Activated B cell treated with CpG ODN at 0.5 μM for 24 hours (primary cell): ENCODE measurements at regions of chr15 and their contacts with region 1.

Region 1: DNA sequence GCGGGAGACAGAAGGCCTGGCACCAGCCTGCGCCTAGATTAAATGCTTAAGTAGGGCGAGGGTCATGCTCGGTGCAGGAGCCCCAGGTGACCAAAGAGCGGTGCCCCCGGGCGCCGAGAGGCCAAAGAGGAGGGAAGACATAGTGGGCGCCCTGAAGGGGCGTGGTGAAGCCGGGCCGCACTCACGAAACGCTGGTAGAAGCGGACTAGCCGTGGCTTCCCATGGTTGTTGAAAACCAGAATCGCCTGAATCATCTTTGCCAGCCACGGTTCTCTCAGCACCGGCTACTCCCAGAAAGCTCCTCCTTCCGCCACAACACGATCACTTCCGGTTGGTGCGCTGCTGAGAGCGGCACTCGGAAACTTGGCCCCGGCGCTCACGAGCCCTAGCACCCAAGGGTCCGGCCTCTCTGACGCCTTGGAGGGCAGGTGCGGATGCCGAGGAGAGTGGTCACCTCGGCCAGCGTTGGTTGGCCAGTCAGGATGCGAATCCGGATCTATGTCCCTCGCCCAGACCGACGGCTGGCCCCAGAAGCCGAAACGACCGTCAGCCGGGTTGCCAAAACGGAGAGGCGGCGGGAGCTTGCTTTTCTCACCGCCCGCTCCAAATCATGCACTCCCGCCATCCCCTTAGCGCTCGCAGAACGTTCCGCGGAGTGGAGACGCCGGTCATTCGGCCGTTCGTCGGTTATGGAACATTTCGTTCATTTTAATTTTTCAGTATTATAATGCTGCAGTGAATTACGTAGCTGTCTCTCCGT is at the start of gene AP3S2:
- DNase-seq: peak; percentile 82
- ATAC-seq: peak; percentile 89
- H3K4me3 Mint-ChIP-seq: peak within 1 kb of the TSS; percentile 95
- H3K27ac Mint-ChIP-seq: peak within 1 kb of the TSS; percentile 94
- H3K4me1 Mint-ChIP-seq: peaks cover 40% of the 10 kb centered on the region
- H3K27me3 Mint-ChIP-seq: no peaks in the 10 kb centered on the region
- CTCF ChIP-seq: no peak
- total RNA-seq, gene AP3S2: 31.8 and 36.4 TPM in 2 replicates

Region 2: GRCh38 chr15:89781891-89782618 is 111.8 kb before region 1 on chr15:
- CTCF ChIA-PET with region 1: no interaction called
- POLR2A ChIA-PET with region 1: interaction called, 12 read pairs
- intact Hi-C with region 1: no loop called
- DNase-seq: no peak
- ATAC-seq: peak; percentile 74
- H3K4me3 Mint-ChIP-seq: peak overlapping the region; percentile 33
- H3K27ac Mint-ChIP-seq: peak overlapping the region; percentile 76
- H3K4me1 Mint-ChIP-seq: peaks cover 39% of the 10 kb centered on the region
- H3K27me3 Mint-ChIP-seq: no peaks in the 10 kb centered on the region
- CTCF ChIP-seq: no peak

Region 3: GRCh38 chr15:89806559-89807550 is 87.0 kb before region 1 on chr15:
- CTCF ChIA-PET with region 1: no interaction called
- POLR2A ChIA-PET with region 1: no interaction called
- intact Hi-C with region 1: no loop called
- DNase-seq: no peak
- ATAC-seq: no peak
- H3K4me3 Mint-ChIP-seq: no peak overlapping the region
- H3K27ac Mint-ChIP-seq: no peak overlapping the region
- H3K4me1 Mint-ChIP-seq: no peaks in the 10 kb centered on the region
- H3K27me3 Mint-ChIP-seq: peaks cover 7% of the 10 kb centered on the region
- CTCF ChIP-seq: no peak

Region 4: DNA sequence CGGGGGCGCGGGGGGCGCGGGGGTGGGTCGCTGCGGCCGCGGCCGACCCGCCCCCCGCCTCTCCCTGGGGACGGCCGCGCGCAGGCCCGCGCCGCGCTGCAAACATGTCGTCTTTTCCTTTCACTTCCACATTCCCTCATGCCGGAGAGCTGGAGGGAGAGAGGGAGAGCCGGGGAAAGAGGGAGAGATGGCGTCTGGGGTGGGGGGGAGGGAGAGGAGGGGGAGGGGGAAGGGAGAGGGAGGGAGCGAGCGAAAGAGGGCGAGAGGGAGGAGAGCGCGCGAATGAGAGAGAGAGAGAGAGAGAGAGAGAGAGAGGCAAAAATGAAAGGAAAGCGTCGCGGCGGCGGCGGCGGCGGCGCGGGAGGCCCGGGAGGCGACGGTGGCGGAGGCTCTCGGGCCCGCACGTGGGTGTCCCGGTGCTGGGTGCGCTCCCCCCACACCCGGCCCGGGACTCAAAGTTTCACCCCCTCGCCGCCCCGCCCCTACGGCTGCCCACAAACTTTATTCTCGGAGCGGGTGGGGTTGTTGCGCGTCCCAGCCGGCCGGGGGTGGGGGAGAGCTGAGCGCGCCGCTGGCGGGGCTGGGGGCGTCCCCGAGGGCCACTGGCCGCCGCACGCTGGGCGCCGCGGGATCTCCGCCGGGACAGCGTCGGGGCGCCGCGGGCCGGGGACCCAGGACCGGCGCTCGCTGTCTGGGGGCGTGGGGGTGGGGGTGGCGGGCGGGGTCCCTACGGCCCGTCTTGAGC is 108.0 kb after region 1 on chr15:
- CTCF ChIA-PET with region 1: no interaction called
- POLR2A ChIA-PET with region 1: interaction called, 15 read pairs
- intact Hi-C with region 1: loop called (anchors 2 kb)
- DNase-seq: peak; percentile 59
- ATAC-seq: peak; percentile 60
- H3K4me3 Mint-ChIP-seq: peak overlapping the region; percentile 91
- H3K27ac Mint-ChIP-seq: peak overlapping the region; percentile 91
- H3K4me1 Mint-ChIP-seq: peaks cover 41% of the 10 kb centered on the region
- H3K27me3 Mint-ChIP-seq: no peaks in the 10 kb centered on the region
- CTCF ChIP-seq: no peak

Region 5: DNA sequence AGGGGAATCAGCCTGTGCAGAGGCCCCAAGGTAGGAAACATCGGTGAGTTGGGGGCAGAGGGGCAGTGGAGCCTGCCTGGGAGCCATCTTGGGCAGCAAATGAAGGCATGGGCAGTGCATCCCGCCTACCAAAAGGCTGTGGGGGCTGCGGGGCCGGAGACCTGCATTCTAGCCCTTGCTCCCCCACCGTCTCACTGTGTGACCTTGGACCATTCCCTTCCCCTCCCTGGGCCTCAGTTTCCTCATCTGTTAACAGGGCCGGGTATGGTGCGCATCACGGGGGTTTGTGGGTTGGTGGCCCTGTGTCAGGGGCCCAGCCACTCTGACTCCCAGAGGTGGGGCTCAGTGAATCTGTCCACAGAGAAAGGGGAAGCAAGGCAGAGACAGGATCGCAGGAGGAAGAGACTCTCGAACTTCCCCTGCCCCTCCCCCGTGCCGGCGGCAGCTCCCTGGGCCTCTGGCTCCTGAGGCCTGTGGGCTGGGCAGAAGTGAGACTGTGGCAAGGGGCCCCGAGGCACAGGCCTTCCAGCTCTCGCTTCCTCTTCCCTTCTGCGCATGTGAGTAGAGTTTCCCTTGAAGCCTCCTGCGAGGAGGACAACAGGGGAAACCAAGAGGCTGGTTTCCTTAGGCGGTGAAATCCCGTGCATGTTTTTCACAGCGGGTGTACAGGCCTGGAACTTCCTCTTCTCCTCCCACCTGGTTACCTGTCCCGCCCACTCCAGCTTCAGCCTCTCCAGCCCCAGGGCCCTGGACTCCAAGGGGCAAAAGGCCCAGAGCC is 165.5 kb after region 1 on chr15:
- CTCF ChIA-PET with region 1: interaction called, 6 read pairs
- POLR2A ChIA-PET with region 1: interaction called, 16 read pairs
- intact Hi-C with region 1: no loop called
- DNase-seq: peak; percentile 85
- ATAC-seq: peak; percentile 84
- H3K4me3 Mint-ChIP-seq: peak overlapping the region; percentile 70
- H3K27ac Mint-ChIP-seq: peak overlapping the region; percentile 97
- H3K4me1 Mint-ChIP-seq: peaks cover 81% of the 10 kb centered on the region
- H3K27me3 Mint-ChIP-seq: no peaks in the 10 kb centered on the region
- CTCF ChIP-seq: no peak